ENCODE measurements at regions of chr11 and their contacts with region 1.

Region 1: DNA sequence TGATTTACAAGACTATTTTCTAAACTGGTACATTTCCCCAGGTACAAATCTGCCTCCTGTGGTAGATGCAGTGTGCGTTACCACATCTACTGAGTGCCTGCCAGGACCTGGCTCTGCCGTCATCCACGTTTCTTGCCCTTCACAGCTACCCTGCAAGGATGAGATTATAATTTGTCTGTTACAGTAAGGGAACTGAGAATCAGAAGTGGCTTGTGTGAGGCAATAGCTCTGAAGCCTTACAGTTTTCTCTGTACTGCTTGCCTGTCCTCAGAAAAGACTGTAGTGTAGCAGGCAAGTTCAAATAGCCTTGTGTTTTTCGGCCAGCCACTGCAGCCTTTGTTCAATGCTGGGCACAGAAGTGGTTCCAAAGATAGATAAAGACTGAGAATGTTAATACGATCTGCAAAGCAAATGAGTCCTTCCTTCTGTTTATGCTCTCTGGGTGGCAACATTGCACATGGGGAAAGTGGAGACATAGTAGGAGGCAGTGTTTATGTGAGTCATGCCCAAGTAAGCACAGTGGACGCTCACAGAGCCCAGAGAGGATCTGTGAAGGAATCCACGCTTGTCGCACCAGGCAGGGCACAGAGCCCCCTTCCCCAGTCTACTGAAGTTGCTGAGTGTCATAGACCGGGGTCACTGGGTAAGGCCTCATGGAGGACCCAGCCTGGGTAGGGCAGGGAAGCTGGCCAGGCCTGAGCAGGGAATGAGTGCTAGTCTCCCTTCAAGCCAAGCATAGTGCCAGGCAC is 49.1 kb downstream of the MICAL2 start:
- DNase-seq: no peak
- H3K4me3 ChIP-seq: no peak overlapping the region
- H3K27ac ChIP-seq: no peak overlapping the region
- H3K4me1 ChIP-seq: peaks cover 32% of the 10 kb centered on the region
- H3K27me3 ChIP-seq: no peaks in the 10 kb centered on the region
- CTCF ChIP-seq: no peak

Region 2: DNA sequence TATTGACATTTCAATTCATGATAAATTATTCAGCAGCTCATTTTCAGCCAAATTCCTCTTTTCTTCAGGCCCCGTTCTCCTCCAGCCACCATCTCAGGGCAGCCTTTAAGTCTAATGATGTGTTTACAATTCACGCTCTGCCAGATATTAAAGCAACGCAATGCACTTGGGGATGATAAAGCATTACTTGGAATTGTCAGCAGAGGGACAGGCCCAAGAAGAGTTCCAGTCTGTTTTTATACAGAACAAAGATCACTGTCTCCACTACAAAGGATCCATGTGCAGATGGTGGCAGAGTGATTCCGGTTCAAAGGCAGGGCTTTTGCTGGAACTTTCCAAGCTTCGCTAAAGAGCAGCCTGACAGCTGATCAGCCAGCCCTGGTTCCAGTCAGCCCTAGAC is 524.1 kb before region 1 on chr11:
- CTCF ChIA-PET with region 1: no interaction called
- POLR2A ChIA-PET with region 1: no interaction called
- intact Hi-C with region 1: no loop called
- DNase-seq: no peak
- H3K4me3 ChIP-seq: no peak overlapping the region
- H3K27ac ChIP-seq: no peak overlapping the region
- H3K4me1 ChIP-seq: no peaks in the 10 kb centered on the region
- H3K27me3 ChIP-seq: peaks cover 9% of the 10 kb centered on the region; the same call in 1 of the 2 replicates
- CTCF ChIP-seq: no peak

Region 3: DNA sequence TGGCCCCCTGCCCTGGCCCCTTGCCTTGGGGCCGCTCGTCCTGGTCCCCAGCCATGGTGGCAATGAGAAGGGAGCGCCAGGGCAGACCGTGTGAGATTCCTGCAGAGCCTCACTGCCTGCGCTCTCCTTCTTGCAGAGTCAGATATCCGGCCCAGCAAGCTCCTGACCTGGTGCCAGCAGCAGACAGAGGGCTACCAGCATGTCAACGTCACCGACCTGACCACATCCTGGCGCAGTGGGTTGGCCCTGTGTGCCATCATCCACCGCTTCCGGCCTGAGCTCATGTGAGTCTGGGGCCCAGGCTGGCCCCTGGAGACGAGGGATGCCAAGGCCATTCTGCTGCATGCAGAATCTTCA is 65.0 kb after region 1 on chr11:
- CTCF ChIA-PET with region 1: no interaction called
- POLR2A ChIA-PET with region 1: no interaction called
- intact Hi-C with region 1: loop called (anchors 10 kb)
- DNase-seq: peak; percentile 78 to 79
- H3K4me3 ChIP-seq: peak overlapping the region; percentile 41; the same call in 1 of the 2 replicates
- H3K27ac ChIP-seq: peak overlapping the region; percentile 94
- H3K4me1 ChIP-seq: peaks cover 70% of the 10 kb centered on the region
- H3K27me3 ChIP-seq: no peaks in the 10 kb centered on the region
- CTCF ChIP-seq: no peak